ENCODE measurements at regions of chr5 and their contacts with region 1.

Region 1: GRCh38 chr5:144191998-144192397 is 21.3 kb downstream of the KCTD16 start:
- DNase-seq: no peak
- ATAC-seq: peak; percentile 77
- H3K4me3 Mint-ChIP-seq: no peak overlapping the region
- H3K27ac Mint-ChIP-seq: no peak overlapping the region
- H3K4me1 Mint-ChIP-seq: peaks cover 37% of the 10 kb centered on the region
- H3K27me3 Mint-ChIP-seq: no peaks in the 10 kb centered on the region

Region 2: DNA sequence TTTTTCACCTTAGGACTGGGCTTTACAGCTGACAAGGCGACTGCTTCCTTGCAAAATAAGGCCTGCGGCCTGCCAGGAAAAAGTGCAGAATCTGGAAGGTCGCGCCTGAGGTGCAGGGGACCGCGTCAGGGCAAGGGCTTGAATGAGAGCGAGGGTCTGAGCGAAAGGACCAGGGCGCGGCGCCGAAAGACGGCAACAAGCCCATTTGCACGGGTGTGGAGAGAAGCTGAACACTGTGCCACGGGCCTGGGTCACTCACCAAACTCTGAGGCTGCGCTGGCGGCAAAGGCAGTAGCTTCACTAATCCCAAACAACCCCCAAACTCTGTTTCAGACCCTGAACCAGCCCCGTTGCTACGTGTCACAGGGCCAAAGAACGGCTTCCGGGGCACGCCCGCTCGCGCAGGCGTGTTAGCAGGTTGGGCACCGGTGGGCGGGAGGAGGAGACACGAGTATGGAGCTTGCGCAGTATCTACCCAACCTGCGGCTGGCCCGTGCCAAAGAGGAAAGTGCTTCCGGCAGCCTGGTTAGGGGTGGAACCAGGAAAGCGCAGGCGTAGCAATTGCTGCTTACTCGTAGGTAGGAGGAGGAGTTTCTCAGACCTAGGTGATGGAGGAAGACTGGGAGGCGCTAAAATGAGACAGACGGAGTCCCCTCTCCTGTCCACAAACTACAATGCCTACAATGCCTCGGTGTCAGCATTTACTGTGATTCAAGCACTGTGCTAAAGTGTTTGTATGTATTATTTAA is 21.5 kb before region 1 on chr5 and contains the starts of genes KCTD16 and YIPF5:
- POLR2A ChIA-PET with region 1: interaction called, 36 read pairs
- DNase-seq: peak; percentile 95
- ATAC-seq: peak; percentile 99
- H3K4me3 Mint-ChIP-seq: peak within 1 kb of the TSS; percentile 90
- H3K27ac Mint-ChIP-seq: peak within 1 kb of the TSS; percentile 84
- H3K4me1 Mint-ChIP-seq: peaks cover 35% of the 10 kb centered on the region
- H3K27me3 Mint-ChIP-seq: peaks cover 2% of the 10 kb centered on the region
- total RNA-seq, gene KCTD16: 0.17 to 0.22 TPM
- total RNA-seq, gene YIPF5: 36.6 to 40.5 TPM

Measured in activated naive CD8-positive, alpha-beta T cell treated with anti-CD3 and anti-CD28 coated beads, Interleukin-2, amount 10 ng/mL, durations not matched to agents 7 days and 5 days (primary cell).